Activated CD8-positive, alpha-beta T cell treated with anti-CD3 and anti-CD28 coated beads for 36 hours (primary cell): ENCODE measurements at regions of chr15 and their contacts with region 1.

Region 1: DNA sequence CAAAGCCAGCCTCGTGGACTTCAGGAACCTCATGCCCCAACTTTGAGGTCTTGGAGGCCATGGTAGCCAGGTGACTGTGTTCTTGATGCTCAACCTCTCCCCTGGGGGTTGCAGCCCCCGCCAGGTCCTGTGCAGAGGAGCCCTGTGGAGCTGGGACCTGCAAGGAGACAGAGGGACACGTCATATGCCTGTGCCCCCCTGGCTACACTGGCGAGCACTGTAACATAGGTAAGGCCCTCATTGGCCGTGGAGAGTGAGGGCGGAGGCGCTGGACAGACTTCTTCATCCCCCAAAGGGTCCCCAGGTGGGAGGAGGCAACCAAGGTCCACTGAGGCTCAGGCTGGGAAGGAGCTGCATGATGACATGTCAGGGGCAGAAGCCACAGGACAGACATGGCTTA is 35.1 kb downstream of the HAPLN3 start:
- DNase-seq: no peak
- ATAC-seq: no peak
- H3K4me3 Mint-ChIP-seq: no peak overlapping the region
- H3K27ac Mint-ChIP-seq: no peak overlapping the region
- H3K4me1 Mint-ChIP-seq: no peaks in the 10 kb centered on the region
- H3K27me3 Mint-ChIP-seq: no peaks in the 10 kb centered on the region
- CTCF ChIP-seq: no peak

Region 2: GRCh38 chr15:88878720-88879184 is 18.5 kb after region 1 on chr15:
- CTCF ChIA-PET with region 1: interaction called, 13 read pairs
- POLR2A ChIA-PET with region 1: no interaction called
- intact Hi-C with region 1: no loop called
- DNase-seq: peak; percentile 67
- ATAC-seq: peak; percentile 86
- H3K4me3 Mint-ChIP-seq: no peak overlapping the region
- H3K27ac Mint-ChIP-seq: no peak overlapping the region
- H3K4me1 Mint-ChIP-seq: no peaks in the 10 kb centered on the region
- H3K27me3 Mint-ChIP-seq: no peaks in the 10 kb centered on the region
- CTCF ChIP-seq: peak; percentile 65